H1 (cell line): ENCODE measurements at regions of chr12 and their contacts with region 1.

Region 1: DNA sequence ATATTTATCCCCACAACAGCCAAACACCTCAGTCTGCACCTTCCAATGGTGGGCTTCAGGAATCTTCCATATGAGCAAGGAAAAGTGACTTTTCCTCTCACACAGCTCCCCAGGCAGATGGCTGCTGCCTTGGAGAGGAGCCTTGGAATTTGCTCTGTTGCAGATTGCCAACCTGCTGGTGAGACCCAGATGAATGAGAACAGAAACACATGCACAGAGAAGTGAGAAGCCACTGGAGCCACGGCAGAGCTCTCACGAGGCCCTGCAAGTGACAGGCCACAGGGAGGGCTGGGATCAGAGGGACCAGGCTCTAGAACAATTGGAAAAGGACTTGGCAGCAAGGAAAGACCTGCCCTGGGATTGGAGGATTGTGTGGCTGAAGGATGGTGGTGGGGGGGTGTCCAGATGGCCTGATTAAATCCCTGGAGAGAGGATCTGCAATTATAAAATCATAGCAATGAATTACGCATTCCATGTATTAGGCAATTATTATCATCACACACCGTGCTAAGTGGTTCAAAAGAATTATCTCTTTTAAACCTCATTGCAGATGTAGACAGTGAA is 84.9 kb upstream of the PWP1 start:
- DNase-seq: no peak
- H3K4me3 ChIP-seq: no peak overlapping the region
- H3K27ac ChIP-seq: no peak overlapping the region
- H3K4me1 ChIP-seq: peaks cover 0 to 5% (median 0%) of the 10 kb centered on the region in 4 experiments; a peak in 1 of 7 replicates
- H3K27me3 ChIP-seq: no peaks in the 10 kb centered on the region
- CTCF ChIP-seq: no peak
- EP300 ChIP-seq: no peak
- POLR2A ChIP-seq: no peak
- RAD21 ChIP-seq: no peak

Region 2: DNA sequence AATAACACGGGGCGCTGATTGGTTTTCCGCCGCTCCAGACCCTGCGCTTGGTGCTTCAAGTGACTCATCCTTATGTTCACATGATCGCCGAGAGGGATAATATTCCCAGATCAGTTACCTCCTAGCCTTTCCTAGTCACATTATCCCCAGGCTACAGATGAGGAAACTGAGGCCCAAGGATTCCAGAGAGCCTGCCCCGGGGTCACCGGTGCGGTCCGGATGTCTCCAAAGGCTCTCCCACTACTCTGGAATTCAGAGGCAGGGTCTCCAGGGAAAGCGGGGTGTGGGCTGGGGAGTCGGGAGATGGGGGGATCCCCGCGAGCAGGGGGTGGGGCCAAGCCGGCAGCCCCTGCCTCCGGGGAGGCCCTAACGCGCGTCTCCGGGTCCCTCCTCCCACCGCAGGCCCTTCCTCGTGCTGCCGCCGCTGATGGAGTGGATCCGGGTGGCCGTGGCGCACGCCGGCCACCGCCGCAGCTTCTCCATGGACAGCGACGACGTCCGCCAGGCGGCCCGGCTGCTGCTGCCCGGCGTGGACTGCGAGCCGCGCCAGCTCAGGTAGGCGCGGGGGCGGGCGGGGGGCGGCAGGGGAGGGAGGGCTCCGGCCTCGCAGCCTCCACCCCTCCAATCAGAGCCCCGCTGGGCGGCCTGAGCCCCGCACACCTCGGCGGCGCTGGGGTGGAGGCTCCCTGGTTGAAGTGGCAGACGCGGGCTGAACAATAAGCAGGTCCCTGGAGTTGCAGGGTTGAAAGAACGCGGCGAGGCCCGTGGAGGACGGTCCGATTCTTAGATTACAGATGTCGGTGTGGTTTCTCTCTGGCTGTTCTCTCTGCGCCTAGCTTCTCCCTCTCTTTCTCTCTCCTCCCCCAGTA is 19.7 kb before region 1 on chr12:
- CTCF ChIA-PET with region 1: interaction called, 25 read pairs
- POLR2A ChIA-PET with region 1: interaction called, 4 read pairs
- DNase-seq: peak in 1 of 2 experiments; percentile 59
- H3K4me3 ChIP-seq: peak overlapping the region; percentile 19 to 56 (median 26); a peak in 7 of 8 replicates
- H3K27ac ChIP-seq: no peak overlapping the region
- H3K4me1 ChIP-seq: peaks cover 7 to 24% (median 12%) of the 10 kb centered on the region in 4 experiments; a peak in 6 of 7 replicates
- H3K27me3 ChIP-seq: peaks cover 0 to 23% (median 15%) of the 10 kb centered on the region in 4 experiments; a peak in 5 of 7 replicates
- CTCF ChIP-seq: no peak
- EP300 ChIP-seq: no peak
- POLR2A ChIP-seq: no peak
- RAD21 ChIP-seq: no peak